Heart left ventricle (tissue), 16 donors: ENCODE measurements at regions of chr1 and their contacts with region 1.

Region 1: GRCh38 chr1:99808391-99809115 is 41.6 kb upstream of the AGL start:
- DNase-seq: peak in 2 of 5 donors; percentile 22 to 28
- ATAC-seq: peak; percentile 79 to 96 (median 90)
- H3K4me3 ChIP-seq: peak overlapping the region in 4 of 12 donors; percentile 3 to 18 (median 12)
- H3K27ac ChIP-seq: peak overlapping the region in 3 of 12 donors; percentile 20 to 84 (median 58)
- H3K4me1 ChIP-seq: peaks cover 0 to 10% (median 0%) of the 10 kb centered on the region in 12 donors
- H3K27me3 ChIP-seq: no peaks in the 10 kb centered on the region
- CTCF ChIP-seq: peak; percentile 54 to 75 (median 65)
- POLR2A ChIP-seq: no peak

Region 2: GRCh38 chr1:99849744-99850458 is 41.3 kb after region 1 on chr1 and contains the start of gene AGL:
- intact Hi-C with region 1: loop called in 3 of 10 experiments (anchors 2 to 5 kb)
- DNase-seq: peak; percentile 86 to 94 (median 89)
- ATAC-seq: peak; percentile 88 to 97 (median 96)
- H3K4me3 ChIP-seq: peak within 1 kb of the TSS; percentile 62 to 90 (median 82)
- H3K27ac ChIP-seq: peak within 1 kb of the TSS; percentile 60 to 96 (median 89)
- H3K4me1 ChIP-seq: peaks cover 0 to 21% (median 8%) of the 10 kb centered on the region in 12 donors
- H3K27me3 ChIP-seq: no peaks in the 10 kb centered on the region
- CTCF ChIP-seq: no peak
- POLR2A ChIP-seq: peak in 1 of 2 donors; percentile 65
- total RNA-seq, gene AGL: 19.1 to 70.4 (median 52.9) TPM

Region 3: GRCh38 chr1:100037927-100038659 is 229.5 kb after region 1 on chr1:
- intact Hi-C with region 1: loop called in 2 of 10 experiments (anchors 2 to 10 kb)
- DNase-seq: peak; percentile 91 to 95 (median 93)
- ATAC-seq: peak; percentile 98 to 100 (median 99)
- H3K4me3 ChIP-seq: peak overlapping the region; percentile 79 to 96 (median 89)
- H3K27ac ChIP-seq: peak overlapping the region; percentile 86 to 99 (median 96)
- H3K4me1 ChIP-seq: peaks cover 0 to 47% (median 24%) of the 10 kb centered on the region in 12 donors
- H3K27me3 ChIP-seq: no peaks in the 10 kb centered on the region
- CTCF ChIP-seq: no peak
- POLR2A ChIP-seq: peak; percentile 75 to 90

Region 4: GRCh38 chr1:100265931-100266740 is 457.6 kb after region 1 on chr1 and contains the start of gene RTCA:
- intact Hi-C with region 1: loop called in 1 of 10 experiments (anchors 5 kb)
- DNase-seq: peak; percentile 96 to 99 (median 98)
- ATAC-seq: peak; percentile 98 to 100 (median 99)
- H3K4me3 ChIP-seq: peak within 1 kb of the TSS; percentile 62 to 99 (median 82)
- H3K27ac ChIP-seq: peak within 1 kb of the TSS; percentile 39 to 92 (median 82)
- H3K4me1 ChIP-seq: peaks cover 0 to 35% (median 23%) of the 10 kb centered on the region in 12 donors
- H3K27me3 ChIP-seq: no peaks in the 10 kb centered on the region
- CTCF ChIP-seq: peak in 1 of 12 donors; percentile 27
- POLR2A ChIP-seq: peak; percentile 14 to 93
- total RNA-seq, gene RTCA: 31.4 to 54.6 (median 36.3) TPM

Region 5: DNA sequence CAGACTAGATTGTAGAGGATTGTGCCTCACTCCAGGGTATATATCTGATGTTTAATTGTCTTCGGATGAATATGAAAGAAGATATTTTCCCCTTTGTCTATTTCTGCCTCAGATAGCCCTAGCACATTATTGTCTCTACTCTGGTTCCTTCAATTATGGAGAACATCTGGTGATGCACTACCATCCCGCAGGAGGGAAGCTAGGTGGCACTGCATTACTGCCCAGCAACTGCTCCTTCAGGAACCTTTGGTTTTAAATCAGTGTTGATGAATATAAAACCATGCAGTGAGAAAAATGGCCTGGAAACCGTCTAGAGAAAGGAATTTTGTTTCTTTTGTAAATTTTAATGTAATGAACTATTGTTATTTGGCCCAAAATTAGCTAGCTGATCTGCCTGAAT is 797.9 kb after region 1 on chr1:
- intact Hi-C with region 1: loop called in 1 of 10 experiments (anchors 10 kb)
- DNase-seq: peak in 3 of 5 donors; percentile 28 to 39 (median 30)
- ATAC-seq: peak in 3 of 4 donors; percentile 64 to 83 (median 81)
- H3K4me3 ChIP-seq: no peak overlapping the region
- H3K27ac ChIP-seq: no peak overlapping the region
- H3K4me1 ChIP-seq: no peaks in the 10 kb centered on the region
- H3K27me3 ChIP-seq: no peaks in the 10 kb centered on the region
- CTCF ChIP-seq: peak; percentile 49 to 82 (median 67)
- POLR2A ChIP-seq: no peak

Region 6: DNA sequence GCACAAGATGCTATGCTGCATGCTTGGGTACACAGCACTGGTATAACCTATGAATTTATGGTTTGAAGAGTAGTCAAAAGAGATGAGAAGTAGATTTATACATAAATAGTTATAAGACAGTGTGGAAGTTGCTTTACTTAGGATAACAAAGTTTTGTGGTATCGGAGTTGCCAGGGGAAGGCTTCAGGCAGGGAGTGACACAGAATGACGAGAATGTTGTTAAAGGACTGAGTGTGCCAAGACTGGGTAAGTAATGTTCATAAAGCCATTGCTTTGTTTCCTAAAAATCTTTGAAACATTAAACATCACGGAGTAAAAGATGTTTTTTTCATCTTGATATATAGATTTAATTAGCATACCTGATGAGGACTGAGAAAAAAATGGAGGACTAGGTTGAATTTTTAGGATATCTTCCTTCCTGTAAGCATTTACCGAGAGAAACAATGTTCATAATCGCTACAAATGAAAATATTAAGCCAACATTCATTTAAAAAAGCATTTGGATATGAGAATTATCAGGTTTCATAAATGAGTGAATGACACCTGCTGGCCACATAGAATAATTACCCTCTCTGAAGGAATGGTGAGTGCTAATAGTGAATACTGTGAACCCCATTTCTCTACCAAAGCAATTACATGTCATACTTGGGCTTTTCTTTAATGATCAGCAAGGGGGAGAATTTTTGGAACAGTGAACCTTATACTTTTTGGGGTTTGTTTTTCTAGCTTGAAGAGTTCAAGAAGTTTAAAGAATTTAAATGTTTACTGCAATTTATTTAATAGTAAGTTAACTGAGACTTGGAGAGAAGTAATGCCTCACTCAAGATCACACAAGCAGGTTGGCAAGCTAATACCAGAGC is 1057.7 kb after region 1 on chr1:
- intact Hi-C with region 1: loop called in 9 of 10 experiments (anchors 2 to 10 kb)
- DNase-seq: no peak
- ATAC-seq: peak in 3 of 4 donors; percentile 55 to 69 (median 60)
- H3K4me3 ChIP-seq: peak overlapping the region in 4 of 12 donors; percentile 8 to 27 (median 11)
- H3K27ac ChIP-seq: no peak overlapping the region
- H3K4me1 ChIP-seq: peaks cover 0 to 10% (median 2%) of the 10 kb centered on the region in 12 donors
- H3K27me3 ChIP-seq: no peaks in the 10 kb centered on the region
- CTCF ChIP-seq: peak; percentile 46 to 78 (median 65)
- POLR2A ChIP-seq: no peak